Left ventricle myocardium superior (tissue), 1 donor: ENCODE measurements at regions of chr18 and their contacts with region 1.

Region 1: DNA sequence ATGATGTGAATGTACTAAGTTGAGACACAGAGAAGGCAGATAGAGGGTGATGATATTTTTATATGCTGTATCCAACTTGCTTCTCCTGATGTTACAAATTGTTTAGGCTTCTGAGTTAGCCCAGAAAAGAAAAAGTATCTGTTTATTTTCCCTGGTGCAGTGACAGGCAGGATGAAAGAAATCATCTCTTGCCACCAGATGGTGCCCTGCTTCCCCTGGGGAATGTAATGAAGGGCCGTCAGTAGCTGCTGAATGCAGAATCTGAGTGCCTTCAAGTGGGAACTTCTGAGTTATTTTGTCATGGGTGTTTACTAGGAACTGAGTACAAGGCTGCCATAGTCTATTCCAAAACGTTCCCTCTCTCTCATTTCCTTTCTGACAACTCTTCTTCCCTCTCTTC is 525.6 kb downstream of the MBD2 start:
- DNase-seq: no peak
- ATAC-seq: peak; percentile 77

Region 2: GRCh38 chr18:52254367-52254766 is 1444.5 kb before region 1 on chr18:
- intact Hi-C with region 1: no loop called
- DNase-seq: no peak
- ATAC-seq: no peak

Region 3: DNA sequence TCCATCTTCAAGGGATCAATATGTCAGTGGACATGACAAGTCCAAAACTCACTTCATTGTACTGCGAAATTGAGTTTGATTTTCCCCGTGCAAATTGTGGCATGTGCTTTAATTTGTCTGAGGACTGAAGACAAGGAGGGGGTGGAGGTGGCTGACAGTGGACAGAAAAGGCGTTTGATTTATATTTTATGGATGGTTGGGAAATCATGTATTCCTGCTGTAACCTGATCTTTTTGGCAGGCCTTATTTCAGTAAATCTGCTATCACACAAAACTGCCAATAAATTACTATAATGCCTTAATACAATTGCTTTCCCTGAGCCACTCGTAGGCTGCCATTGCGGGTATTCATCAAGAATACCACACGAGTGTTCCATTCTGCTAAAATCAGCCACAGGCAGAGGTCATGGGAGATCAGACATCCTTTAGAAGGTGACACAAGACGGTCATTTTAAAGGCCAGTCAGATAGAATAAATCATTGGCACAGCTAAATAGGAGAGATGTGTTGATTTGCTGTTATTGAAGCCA is 194.9 kb before region 1 on chr18:
- intact Hi-C with region 1: no loop called
- DNase-seq: no peak
- ATAC-seq: no peak

Region 4: GRCh38 chr18:54119524-54120019 is 420.7 kb after region 1 on chr18:
- intact Hi-C with region 1: loop called (anchors 2 kb)
- DNase-seq: no peak
- ATAC-seq: peak; percentile 81